Ascending aorta (tissue), 2 donors: ENCODE measurements at regions of chr15 and their contacts with region 1.

Region 1: GRCh38 chr15:67254238-67255175 is at the starts of genes AAGAB and IQCH:
- DNase-seq: peak; percentile 89 to 98
- H3K4me3 ChIP-seq: peak within 1 kb of the TSS; percentile 70 to 91
- H3K27ac ChIP-seq: peak within 1 kb of the TSS; percentile 81 to 96
- H3K4me1 ChIP-seq: peaks cover 5 to 6% of the 10 kb centered on the region in 2 donors
- H3K27me3 ChIP-seq: no peaks in the 10 kb centered on the region
- CTCF ChIP-seq: no peak
- total RNA-seq, gene AAGAB: 27.8 TPM
- total RNA-seq, gene IQCH: not detected

Region 2: DNA sequence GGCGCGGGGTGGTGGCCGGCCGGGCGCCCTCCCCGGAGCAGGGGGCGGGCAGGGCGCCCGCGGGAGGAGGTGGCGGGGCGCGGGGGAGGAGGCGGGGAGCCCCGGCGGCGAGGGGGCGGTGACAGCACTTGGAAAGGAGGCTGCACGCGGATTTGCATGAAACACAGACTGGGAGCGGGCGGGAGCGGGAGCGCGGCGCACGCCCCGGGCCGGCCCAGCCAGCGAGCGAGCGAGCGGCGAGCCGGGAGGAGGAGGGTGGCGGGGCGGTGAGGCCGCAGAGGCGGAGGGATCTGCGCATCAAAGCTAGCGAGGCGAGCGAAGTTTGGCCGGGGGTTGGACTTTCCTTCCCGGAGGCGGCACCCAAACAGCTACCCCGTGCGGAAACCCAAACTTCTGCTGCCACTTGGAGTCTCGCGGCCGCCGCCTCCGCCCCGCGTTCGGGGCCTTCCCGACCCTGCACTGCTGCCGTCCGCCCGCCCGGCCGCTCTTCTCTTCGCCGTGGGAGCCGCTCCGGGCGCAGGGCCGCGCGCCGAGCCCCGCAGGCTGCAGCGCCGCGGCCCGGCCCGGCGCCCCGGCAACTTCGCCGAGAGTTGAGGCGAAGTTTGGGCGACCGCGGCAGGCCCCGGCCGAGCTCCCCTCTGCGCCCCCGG is 188.9 kb before region 1 on chr15 and contains the start of gene SMAD3:
- intact Hi-C with region 1: loop called (anchors 1 kb)
- DNase-seq: peak; percentile 57 to 94
- H3K4me3 ChIP-seq: peak within 1 kb of the TSS; percentile 85 to 94
- H3K27ac ChIP-seq: peak within 1 kb of the TSS; percentile 96
- H3K4me1 ChIP-seq: peaks cover 8 to 19% of the 10 kb centered on the region in 2 donors
- H3K27me3 ChIP-seq: no peaks in the 10 kb centered on the region
- CTCF ChIP-seq: no peak
- total RNA-seq, gene SMAD3: 89.3 TPM

Region 3: DNA sequence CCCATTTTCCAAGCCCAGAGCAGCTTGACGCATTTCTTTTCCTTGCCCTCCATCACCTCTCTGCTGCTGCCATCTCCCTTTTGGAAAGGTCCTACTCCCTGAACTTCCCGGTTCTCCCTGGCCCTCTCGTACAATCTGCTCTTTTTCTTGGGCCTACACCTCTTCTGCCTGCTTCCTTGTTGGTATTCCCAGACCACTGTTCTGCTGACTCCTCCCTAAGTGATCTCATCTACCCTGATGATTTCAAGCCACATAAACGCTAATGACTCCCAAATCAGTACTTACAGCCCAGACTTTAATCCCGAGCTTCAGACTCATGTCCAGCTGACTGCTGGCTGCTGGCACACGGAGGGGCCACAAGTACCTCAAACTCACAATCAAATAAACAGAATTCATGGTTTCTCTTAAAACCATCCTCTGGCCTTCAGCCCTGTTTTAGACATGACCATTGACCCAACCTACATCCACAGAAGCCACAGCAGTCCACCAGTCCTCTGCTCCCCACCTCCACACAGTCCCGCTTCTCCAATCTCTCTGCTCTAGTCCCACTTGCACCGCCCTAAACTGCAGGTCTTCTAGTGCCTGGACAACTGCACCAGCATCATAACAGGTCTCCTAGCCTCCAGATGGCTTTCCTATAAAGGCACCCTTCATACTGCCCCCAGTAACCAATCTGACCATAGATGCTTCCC is 57.7 kb before region 1 on chr15:
- intact Hi-C with region 1: loop called (anchors 2 kb)
- DNase-seq: no peak
- H3K4me3 ChIP-seq: no peak overlapping the region
- H3K27ac ChIP-seq: peak overlapping the region; percentile 27 to 64
- H3K4me1 ChIP-seq: peaks cover 3 to 50% of the 10 kb centered on the region in 2 donors
- H3K27me3 ChIP-seq: no peaks in the 10 kb centered on the region
- CTCF ChIP-seq: no peak

Region 4: GRCh38 chr15:67311731-67312130 is 57.2 kb after region 1 on chr15:
- intact Hi-C with region 1: no loop called
- DNase-seq: no peak
- H3K4me3 ChIP-seq: no peak overlapping the region
- H3K27ac ChIP-seq: no peak overlapping the region
- H3K4me1 ChIP-seq: no peaks in the 10 kb centered on the region
- H3K27me3 ChIP-seq: no peaks in the 10 kb centered on the region
- CTCF ChIP-seq: no peak